AG04450 (cell line): ENCODE measurements at regions of chr19 and their contacts with region 1.

Region 1: GRCh38 chr19:17052439-17053210 is 22.6 kb downstream of the HAUS8 start:
- DNase-seq: no peak
- H3K4me3 ChIP-seq: no peak overlapping the region
- H3K27ac ChIP-seq: no peak overlapping the region
- H3K27me3 ChIP-seq: no peaks in the 10 kb centered on the region
- CTCF ChIP-seq: peak; percentile 74

Region 2: GRCh38 chr19:16714702-16715287 is 337.8 kb before region 1 on chr19:
- CTCF ChIA-PET with region 1: interaction called, 16 read pairs
- POLR2A ChIA-PET with region 1: interaction called, 5 read pairs
- DNase-seq: no peak
- H3K4me3 ChIP-seq: no peak overlapping the region
- H3K27ac ChIP-seq: no peak overlapping the region
- H3K27me3 ChIP-seq: no peaks in the 10 kb centered on the region
- CTCF ChIP-seq: peak; percentile 84

Region 3: DNA sequence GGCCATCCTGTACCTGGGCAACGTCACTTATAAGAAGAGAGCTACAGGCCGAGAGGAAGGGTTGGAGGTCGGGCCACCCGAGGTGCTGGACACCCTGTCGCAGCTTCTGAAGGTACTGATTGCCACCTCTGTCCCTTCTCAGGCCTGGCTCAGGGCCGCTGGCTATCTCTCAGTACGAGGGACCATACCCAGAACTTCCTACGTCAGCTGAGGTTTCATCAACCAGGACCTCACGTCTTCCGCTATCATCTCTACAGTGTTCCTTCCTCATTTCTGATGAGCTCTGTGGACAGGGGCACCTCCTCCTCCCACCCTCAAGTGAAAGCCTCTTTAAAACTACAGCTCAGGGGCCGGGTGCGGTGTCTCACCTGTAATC is 104.3 kb after region 1 on chr19:
- CTCF ChIA-PET with region 1: no interaction called
- POLR2A ChIA-PET with region 1: no interaction called
- DNase-seq: no peak
- H3K4me3 ChIP-seq: no peak overlapping the region
- H3K27ac ChIP-seq: no peak overlapping the region
- H3K27me3 ChIP-seq: no peaks in the 10 kb centered on the region
- CTCF ChIP-seq: no peak